ENCODE measurements at regions of chr2 and their contacts with region 1.

Region 1: GRCh38 chr2:172358691-172359556 is 68.5 kb upstream of the ITGA6 start:
- DNase-seq: peak in 1 of 5 donors; percentile 16
- ATAC-seq: peak in 2 of 4 donors; percentile 25 to 41
- H3K4me3 ChIP-seq: no peak overlapping the region
- H3K27ac ChIP-seq: peak overlapping the region in 7 of 12 donors; percentile 58 to 76 (median 72)
- H3K4me1 ChIP-seq: peaks cover 0 to 36% (median 25%) of the 10 kb centered on the region in 12 donors
- H3K27me3 ChIP-seq: no peaks in the 10 kb centered on the region
- CTCF ChIP-seq: no peak
- POLR2A ChIP-seq: no peak

Region 2: DNA sequence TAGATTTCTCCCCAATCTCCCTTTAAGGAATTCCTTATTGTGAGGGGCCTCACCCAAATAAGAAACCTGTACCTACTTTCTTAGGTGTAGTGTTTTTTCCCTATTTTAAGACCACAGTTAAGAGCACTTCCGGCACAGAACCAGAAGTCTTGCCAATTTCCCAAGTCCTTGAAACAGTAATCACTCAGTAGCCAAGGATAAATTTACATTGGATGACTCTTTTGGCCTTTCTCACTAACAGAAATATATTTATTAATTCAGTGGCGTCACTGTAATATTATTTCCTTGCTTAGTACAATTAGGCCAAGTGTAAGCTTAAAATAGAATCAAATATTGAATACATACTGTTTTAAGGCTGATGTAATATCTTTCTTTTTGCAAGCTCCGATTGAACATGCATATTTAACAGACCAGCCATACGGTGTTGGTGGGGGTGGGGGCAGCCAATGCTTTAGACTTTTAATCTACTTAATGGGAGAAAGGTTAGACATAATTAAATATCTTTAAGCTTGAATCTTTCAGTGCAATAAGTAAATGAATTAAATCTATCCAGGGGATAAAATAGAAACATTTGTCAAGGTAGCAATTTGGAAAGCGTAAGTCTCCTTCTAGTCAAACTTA is 17.7 kb after region 1 on chr2:
- intact Hi-C with region 1: loop called in 1 of 10 experiments (anchors 2 kb)
- DNase-seq: no peak
- ATAC-seq: peak in 1 of 4 donors; percentile 29
- H3K4me3 ChIP-seq: no peak overlapping the region
- H3K27ac ChIP-seq: peak overlapping the region in 5 of 12 donors; percentile 8 to 57 (median 47)
- H3K4me1 ChIP-seq: peaks cover 0 to 28% (median 17%) of the 10 kb centered on the region in 12 donors
- H3K27me3 ChIP-seq: no peaks in the 10 kb centered on the region
- CTCF ChIP-seq: no peak
- POLR2A ChIP-seq: no peak

Region 3: GRCh38 chr2:172404824-172405223 is 45.9 kb after region 1 on chr2:
- intact Hi-C with region 1: loop called in 1 of 10 experiments (anchors 5 kb)
- DNase-seq: no peak
- ATAC-seq: peak in 2 of 4 donors; percentile 16 to 41
- H3K4me3 ChIP-seq: no peak overlapping the region
- H3K27ac ChIP-seq: peak overlapping the region in 9 of 12 donors; percentile 5 to 73 (median 22)
- H3K4me1 ChIP-seq: peaks cover 0 to 45% (median 17%) of the 10 kb centered on the region in 12 donors
- H3K27me3 ChIP-seq: no peaks in the 10 kb centered on the region
- CTCF ChIP-seq: no peak
- POLR2A ChIP-seq: no peak

Region 4: DNA sequence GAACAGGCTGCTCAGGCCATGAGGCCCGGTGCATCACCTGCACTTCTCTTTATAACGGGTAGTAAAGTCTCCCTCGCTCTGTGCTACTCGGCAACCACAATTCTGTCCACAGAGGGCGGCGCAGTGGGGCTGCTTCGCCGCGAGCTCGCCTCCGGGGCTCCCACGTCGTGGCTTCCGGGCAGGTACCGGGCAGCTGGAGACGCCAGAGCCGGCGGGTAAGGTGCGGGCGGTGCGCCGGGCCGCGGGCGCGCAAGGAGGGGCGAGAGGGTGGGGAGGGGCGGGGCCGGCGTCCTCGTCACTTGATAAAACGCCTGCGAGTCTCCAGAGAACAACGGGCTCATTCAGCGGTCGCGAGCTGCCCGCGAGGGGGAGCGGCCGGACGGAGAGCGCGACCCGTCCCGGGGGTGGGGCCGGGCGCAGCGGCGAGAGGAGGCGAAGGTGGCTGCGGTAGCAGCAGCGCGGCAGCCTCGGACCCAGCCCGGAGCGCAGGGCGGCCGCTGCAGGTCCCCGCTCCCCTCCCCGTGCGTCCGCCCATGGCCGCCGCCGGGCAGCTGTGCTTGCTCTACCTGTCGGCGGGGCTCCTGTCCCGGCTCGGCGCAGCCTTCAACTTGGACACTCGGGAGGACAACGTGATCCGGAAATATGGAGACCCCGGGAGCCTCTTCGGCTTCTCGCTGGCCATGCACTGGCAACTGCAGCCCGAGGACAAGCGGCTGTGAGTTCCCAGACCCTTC is 68.5 kb after region 1 on chr2 and contains the start of gene ITGA6:
- intact Hi-C with region 1: loop called in 1 of 10 experiments (anchors 5 kb)
- DNase-seq: peak; percentile 76 to 86 (median 78)
- ATAC-seq: peak; percentile 16 to 86 (median 76)
- H3K4me3 ChIP-seq: peak within 1 kb of the TSS; percentile 64 to 95 (median 86)
- H3K27ac ChIP-seq: peak within 1 kb of the TSS; percentile 72 to 95 (median 90)
- H3K4me1 ChIP-seq: peaks cover 0 to 48% (median 24%) of the 10 kb centered on the region in 12 donors
- H3K27me3 ChIP-seq: peaks cover 0 to 24% (median 0%) of the 10 kb centered on the region in 9 donors
- CTCF ChIP-seq: peak in 8 of 12 donors; percentile 17 to 52 (median 33)
- POLR2A ChIP-seq: peak in 1 of 2 donors; percentile 90
- total RNA-seq, gene ITGA6: 40.5 to 84.8 (median 51.2) TPM